Activated CD4-positive, alpha-beta memory T cell treated with anti-CD3 and anti-CD28 coated beads for 36 hours (primary cell): ENCODE measurements at regions of chr10 and their contacts with region 1.

Region 1: DNA sequence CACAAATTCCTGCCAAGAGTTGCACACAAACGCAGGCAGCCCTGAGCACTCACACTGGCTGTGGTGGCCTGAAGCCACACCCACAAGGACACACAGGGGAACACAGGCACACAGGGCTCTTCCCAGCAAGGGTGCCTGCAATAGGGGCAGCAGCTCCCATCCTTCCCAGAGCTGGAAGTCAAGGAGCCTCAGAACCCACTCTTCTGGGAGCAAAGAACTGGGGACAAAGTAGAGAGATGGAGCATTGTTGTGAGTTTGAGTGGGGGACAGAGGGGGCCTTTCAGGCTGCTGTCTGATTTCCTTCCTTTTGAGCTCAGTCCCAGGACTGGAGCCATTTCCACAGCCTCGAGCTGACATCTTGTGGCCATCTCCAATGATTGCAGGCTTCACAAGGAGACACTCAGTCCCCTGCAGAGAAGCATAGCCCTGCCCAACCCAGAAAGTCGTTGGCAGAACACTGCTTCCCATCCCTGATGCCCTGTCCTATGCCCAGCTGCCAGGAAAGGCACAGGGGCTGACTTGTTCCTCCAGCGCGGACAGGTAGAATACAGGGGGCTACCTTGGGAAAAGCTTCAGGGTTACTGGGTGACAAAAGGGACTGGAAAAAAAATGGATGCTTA is 34.4 kb upstream of the SLF2 start:
- DNase-seq: peak; percentile 60
- H3K4me3 Mint-ChIP-seq: no peak overlapping the region
- H3K27ac Mint-ChIP-seq: no peak overlapping the region
- H3K4me1 Mint-ChIP-seq: no peaks in the 10 kb centered on the region
- H3K27me3 Mint-ChIP-seq: peaks cover 12% of the 10 kb centered on the region

Region 2: GRCh38 chr10:100470367-100470766 is 408.0 kb before region 1 on chr10:
- CTCF ChIA-PET with region 1: no interaction called
- POLR2A ChIA-PET with region 1: no interaction called
- intact Hi-C with region 1: no loop called
- DNase-seq: no peak
- H3K4me3 Mint-ChIP-seq: no peak overlapping the region
- H3K27ac Mint-ChIP-seq: no peak overlapping the region
- H3K4me1 Mint-ChIP-seq: no peaks in the 10 kb centered on the region
- H3K27me3 Mint-ChIP-seq: peaks cover 3% of the 10 kb centered on the region

Region 3: GRCh38 chr10:100562008-100562711 is 316.2 kb before region 1 on chr10:
- CTCF ChIA-PET with region 1: interaction called, 40 read pairs
- POLR2A ChIA-PET with region 1: no interaction called
- intact Hi-C with region 1: loop called (anchors 2 kb)
- DNase-seq: peak; percentile 86
- H3K4me3 Mint-ChIP-seq: no peak overlapping the region
- H3K27ac Mint-ChIP-seq: no peak overlapping the region
- H3K4me1 Mint-ChIP-seq: peaks cover 10% of the 10 kb centered on the region
- H3K27me3 Mint-ChIP-seq: peaks cover 29% of the 10 kb centered on the region

Region 4: GRCh38 chr10:100645091-100645490 is 233.3 kb before region 1 on chr10:
- CTCF ChIA-PET with region 1: no interaction called
- POLR2A ChIA-PET with region 1: no interaction called
- intact Hi-C with region 1: no loop called
- DNase-seq: no peak
- H3K4me3 Mint-ChIP-seq: no peak overlapping the region
- H3K27ac Mint-ChIP-seq: no peak overlapping the region
- H3K4me1 Mint-ChIP-seq: peaks cover 8% of the 10 kb centered on the region
- H3K27me3 Mint-ChIP-seq: peaks cover 45% of the 10 kb centered on the region

Region 5: GRCh38 chr10:100670828-100671479 is 207.4 kb before region 1 on chr10:
- CTCF ChIA-PET with region 1: interaction called, 10 read pairs
- POLR2A ChIA-PET with region 1: no interaction called
- intact Hi-C with region 1: loop called (anchors 2 kb)
- DNase-seq: peak; percentile 75
- H3K4me3 Mint-ChIP-seq: no peak overlapping the region
- H3K27ac Mint-ChIP-seq: no peak overlapping the region
- H3K4me1 Mint-ChIP-seq: peaks cover 3% of the 10 kb centered on the region
- H3K27me3 Mint-ChIP-seq: peaks cover 56% of the 10 kb centered on the region

Region 6: DNA sequence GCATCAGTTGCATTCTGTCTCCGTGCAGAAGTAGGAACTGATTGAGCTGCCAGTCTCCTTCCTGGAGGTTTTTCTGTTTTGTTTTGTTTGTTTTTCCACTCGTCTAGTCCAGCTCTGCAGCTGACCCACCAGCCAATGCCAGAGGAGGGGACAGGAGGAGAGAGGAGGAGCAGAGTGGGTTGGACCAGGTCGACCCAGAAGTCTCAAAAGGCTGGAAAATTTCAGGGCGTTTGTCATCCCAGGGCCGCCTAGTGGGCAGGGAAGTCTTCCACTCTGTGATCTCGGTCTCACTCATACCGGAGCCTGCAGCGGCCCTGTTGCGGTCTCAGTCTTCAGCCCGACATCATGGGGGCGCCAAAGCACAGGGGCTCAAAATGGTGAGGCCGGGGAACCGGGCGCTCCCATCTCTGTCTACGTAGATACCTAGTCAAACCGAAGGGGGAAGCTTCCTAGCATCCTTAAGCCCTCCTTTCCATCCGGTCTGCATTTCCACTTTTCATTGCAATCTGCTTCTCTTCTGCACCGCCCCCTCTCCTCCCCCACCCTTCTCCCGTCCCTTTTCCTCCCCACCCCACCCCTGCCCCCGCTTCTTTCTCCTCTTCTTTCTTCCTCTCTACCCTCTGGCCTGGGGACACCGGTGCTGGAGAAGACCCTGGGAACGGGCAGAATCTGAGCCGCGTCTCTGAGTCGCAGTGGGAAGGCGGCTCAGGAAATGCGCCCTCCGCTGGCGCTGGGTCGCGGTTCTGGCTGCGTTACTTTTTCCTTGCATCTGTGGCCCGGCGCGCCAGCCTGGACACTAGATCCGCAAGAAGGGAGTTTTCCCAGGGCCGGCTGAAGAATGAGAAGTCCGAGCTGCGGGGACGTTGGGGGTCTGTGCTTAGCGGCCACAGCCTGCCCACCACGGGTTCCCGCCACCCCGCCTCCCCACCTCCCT is 149.2 kb before region 1 on chr10:
- CTCF ChIA-PET with region 1: interaction called, 3 read pairs
- POLR2A ChIA-PET with region 1: no interaction called
- intact Hi-C with region 1: loop called (anchors 5 kb)
- DNase-seq: peak; percentile 63
- H3K4me3 Mint-ChIP-seq: no peak overlapping the region
- H3K27ac Mint-ChIP-seq: no peak overlapping the region
- H3K4me1 Mint-ChIP-seq: peaks cover 20% of the 10 kb centered on the region
- H3K27me3 Mint-ChIP-seq: peaks cover 80% of the 10 kb centered on the region

Region 7: DNA sequence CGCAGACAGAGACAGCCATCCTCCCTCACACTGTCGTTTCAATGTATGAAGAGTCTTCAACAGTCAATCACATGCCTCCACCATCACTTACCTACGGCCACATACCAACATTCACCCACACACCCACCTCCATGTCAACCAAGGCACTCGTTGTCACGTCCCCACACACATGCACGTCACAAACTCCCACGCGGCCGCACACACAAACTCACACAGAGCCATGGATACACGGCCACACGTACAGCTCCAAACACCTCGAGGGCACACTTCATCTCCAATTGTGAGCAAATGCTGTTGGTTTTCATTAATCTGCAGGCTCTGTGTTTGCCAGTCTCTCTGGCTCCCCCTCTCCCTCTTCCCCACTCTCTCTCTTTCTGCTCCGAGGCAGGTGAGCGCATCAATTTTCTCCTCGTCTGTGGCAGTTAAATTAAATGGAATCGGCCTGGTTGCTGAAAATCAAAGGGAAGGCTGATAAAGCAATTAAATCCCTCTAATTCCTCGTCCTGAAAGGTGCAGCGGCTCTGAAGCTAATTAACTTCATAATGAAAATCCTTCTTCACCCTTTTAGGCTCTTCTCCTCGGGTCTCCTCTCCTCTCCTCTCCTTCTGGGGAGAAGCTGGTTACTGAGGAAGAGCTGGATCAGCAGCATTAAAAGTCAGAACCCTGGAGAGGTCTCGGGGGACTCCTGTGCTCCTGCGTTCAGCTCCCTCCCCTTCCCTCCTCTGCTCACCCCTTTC is 19.5 kb before region 1 on chr10:
- CTCF ChIA-PET with region 1: no interaction called
- POLR2A ChIA-PET with region 1: no interaction called
- intact Hi-C with region 1: no loop called
- DNase-seq: no peak
- H3K4me3 Mint-ChIP-seq: no peak overlapping the region
- H3K27ac Mint-ChIP-seq: no peak overlapping the region
- H3K4me1 Mint-ChIP-seq: no peaks in the 10 kb centered on the region
- H3K27me3 Mint-ChIP-seq: peaks cover 52% of the 10 kb centered on the region

Region 8: DNA sequence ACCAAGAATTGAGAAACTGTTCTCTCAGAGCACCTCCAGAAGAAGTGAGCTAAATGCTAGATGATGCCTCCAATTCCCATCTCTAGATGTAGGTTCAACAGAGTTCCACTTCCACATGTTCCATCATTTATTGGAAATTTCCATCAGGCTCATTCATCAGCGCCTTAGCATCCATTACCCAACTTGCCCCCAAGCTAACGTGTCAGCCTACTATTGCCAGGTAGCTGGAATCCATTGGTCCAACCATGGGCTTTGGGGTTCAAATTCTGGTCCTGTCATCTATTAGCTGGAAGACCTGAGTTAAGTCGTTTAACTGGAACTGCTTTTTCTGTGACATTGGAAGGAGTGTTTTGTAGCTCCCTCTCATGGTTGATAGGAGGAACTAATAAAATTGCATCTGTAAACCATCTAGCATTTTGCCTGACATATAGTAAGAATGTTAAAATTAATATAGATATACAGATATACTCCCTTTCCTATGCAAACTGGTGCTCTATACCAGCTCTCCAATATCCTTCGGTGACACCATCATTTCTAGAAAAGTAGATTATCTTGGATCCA is 10.5 kb after region 1 on chr10:
- CTCF ChIA-PET with region 1: interaction called, 13 read pairs
- POLR2A ChIA-PET with region 1: no interaction called
- intact Hi-C with region 1: no loop called
- DNase-seq: no peak
- H3K4me3 Mint-ChIP-seq: no peak overlapping the region
- H3K27ac Mint-ChIP-seq: no peak overlapping the region
- H3K4me1 Mint-ChIP-seq: no peaks in the 10 kb centered on the region
- H3K27me3 Mint-ChIP-seq: peaks cover 15% of the 10 kb centered on the region

Region 9: GRCh38 chr10:100939763-100940344 is 61.5 kb after region 1 on chr10:
- CTCF ChIA-PET with region 1: no interaction called
- POLR2A ChIA-PET with region 1: no interaction called
- intact Hi-C with region 1: no loop called
- DNase-seq: no peak
- H3K4me3 Mint-ChIP-seq: no peak overlapping the region
- H3K27ac Mint-ChIP-seq: no peak overlapping the region
- H3K4me1 Mint-ChIP-seq: peaks cover 13% of the 10 kb centered on the region
- H3K27me3 Mint-ChIP-seq: no peaks in the 10 kb centered on the region